ENCODE measurements at regions of chr4 and their contacts with region 1.

Region 1: DNA sequence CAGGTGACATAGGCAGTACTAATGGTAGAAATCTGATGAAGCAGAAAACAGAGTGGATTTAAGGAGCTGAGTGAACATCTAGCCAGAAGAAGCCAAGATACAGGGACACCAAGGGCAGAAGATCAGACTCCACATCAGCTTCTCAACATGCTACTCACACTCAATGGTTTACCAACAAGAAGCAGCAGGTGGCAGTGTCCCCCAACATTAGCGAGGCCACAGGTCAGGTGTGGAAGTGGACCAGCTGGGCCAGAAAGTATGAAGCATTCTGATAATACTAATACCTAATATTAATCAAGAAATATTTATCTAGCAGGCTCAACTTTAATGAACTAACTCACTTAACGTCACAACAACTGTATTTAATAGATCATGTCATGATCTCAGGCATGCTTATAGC is 73.4 kb upstream of the TTC29 start:
- DNase-seq: peak; percentile 70 to 74
- H3K4me3 ChIP-seq: no peak overlapping the region
- H3K4me3 Mint-ChIP-seq: no peak overlapping the region
- H3K27ac Mint-ChIP-seq: no peak overlapping the region
- H3K4me1 ChIP-seq: no peaks in the 10 kb centered on the region
- H3K4me1 Mint-ChIP-seq: no peaks in the 10 kb centered on the region
- H3K27me3 ChIP-seq: no peaks in the 10 kb centered on the region
- H3K27me3 Mint-ChIP-seq: peaks cover 21% of the 10 kb centered on the region
- CTCF ChIP-seq: peak; percentile 76 to 77

Region 2: GRCh38 chr4:145945431-145946155 is 1073.5 kb before region 1 on chr4:
- CTCF ChIA-PET with region 1: no interaction called
- POLR2A ChIA-PET with region 1: no interaction called
- intact Hi-C with region 1: no loop called
- DNase-seq: no peak
- H3K4me3 ChIP-seq: no peak overlapping the region
- H3K4me3 Mint-ChIP-seq: no peak overlapping the region
- H3K27ac Mint-ChIP-seq: no peak overlapping the region
- H3K4me1 ChIP-seq: no peaks in the 10 kb centered on the region
- H3K4me1 Mint-ChIP-seq: no peaks in the 10 kb centered on the region
- H3K27me3 ChIP-seq: no peaks in the 10 kb centered on the region
- H3K27me3 Mint-ChIP-seq: peaks cover 21% of the 10 kb centered on the region
- CTCF ChIP-seq: no peak

Region 3: DNA sequence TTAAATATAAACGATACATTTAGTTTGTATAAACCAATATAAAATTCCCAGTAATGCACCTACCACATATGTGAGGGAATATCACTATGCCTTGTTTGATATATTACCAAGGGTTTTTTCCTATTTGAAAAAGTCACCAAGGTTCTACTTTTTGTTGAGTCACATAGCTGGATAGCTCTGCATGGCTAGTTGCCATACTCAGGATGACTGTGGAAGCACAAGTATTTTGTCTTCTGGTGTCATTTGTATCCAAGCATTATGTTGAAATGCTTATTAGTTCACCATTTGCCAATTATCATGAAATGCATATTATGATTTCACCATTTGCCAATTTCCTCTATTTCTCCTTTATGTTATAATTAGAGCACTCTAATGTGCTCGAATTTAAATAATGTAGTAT is 89.3 kb after region 1 on chr4:
- CTCF ChIA-PET with region 1: no interaction called
- POLR2A ChIA-PET with region 1: no interaction called
- intact Hi-C with region 1: no loop called
- DNase-seq: no peak
- H3K4me3 ChIP-seq: no peak overlapping the region
- H3K4me3 Mint-ChIP-seq: no peak overlapping the region
- H3K27ac Mint-ChIP-seq: no peak overlapping the region
- H3K4me1 ChIP-seq: no peaks in the 10 kb centered on the region
- H3K4me1 Mint-ChIP-seq: no peaks in the 10 kb centered on the region
- H3K27me3 ChIP-seq: no peaks in the 10 kb centered on the region
- H3K27me3 Mint-ChIP-seq: peaks cover 8% of the 10 kb centered on the region
- CTCF ChIP-seq: no peak

Region 4: GRCh38 chr4:147518846-147519767 is 500.0 kb after region 1 on chr4:
- CTCF ChIA-PET with region 1: no interaction called
- POLR2A ChIA-PET with region 1: no interaction called
- intact Hi-C with region 1: loop called (anchors 10 kb)
- DNase-seq: peak; percentile 64 to 65
- H3K4me3 ChIP-seq: no peak overlapping the region
- H3K4me3 Mint-ChIP-seq: no peak overlapping the region
- H3K27ac Mint-ChIP-seq: no peak overlapping the region
- H3K4me1 ChIP-seq: no peaks in the 10 kb centered on the region
- H3K4me1 Mint-ChIP-seq: no peaks in the 10 kb centered on the region
- H3K27me3 ChIP-seq: no peaks in the 10 kb centered on the region
- H3K27me3 Mint-ChIP-seq: no peaks in the 10 kb centered on the region
- CTCF ChIP-seq: peak; percentile 86 to 87